ENCODE measurements at regions of chr14 and their contacts with region 1.

Region 1: DNA sequence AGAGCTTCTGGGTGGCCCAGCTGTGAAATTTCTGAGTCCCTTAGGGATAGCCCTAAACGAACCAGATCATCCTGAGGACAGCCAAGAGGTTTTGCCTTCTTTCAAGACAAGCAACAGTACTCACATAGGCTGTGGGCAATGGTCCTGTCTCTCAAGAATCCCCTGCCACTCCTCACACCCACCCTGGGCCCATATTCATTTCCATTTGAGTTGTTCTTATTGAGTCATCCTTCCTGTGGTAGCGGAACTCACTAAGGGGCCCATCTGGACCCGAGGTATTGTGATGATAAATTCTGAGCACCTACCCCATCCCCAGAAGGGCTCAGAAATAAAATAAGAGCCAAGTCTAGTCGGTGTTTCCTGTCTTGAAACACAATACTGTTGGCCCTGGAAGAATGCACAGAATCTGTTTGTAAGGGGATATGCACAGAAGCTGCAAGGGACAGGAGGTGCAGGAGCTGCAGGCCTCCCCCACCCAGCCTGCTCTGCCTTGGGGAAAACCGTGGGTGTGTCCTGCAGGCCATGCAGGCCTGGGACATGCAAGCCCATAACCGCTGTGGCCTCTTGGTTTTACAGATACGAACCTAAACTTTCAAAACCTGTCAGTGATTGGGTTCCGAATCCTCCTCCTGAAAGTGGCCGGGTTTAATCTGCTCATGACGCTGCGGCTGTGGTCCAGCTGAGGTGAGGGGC is 38.9 kb downstream of the DAD1 start:
- DNase-seq: no peak
- ATAC-seq: peak in 2 of 4 donors; percentile 17 to 24
- H3K4me3 ChIP-seq: peak overlapping the region in 1 of 12 donors; percentile 32
- H3K27ac ChIP-seq: peak overlapping the region in 5 of 12 donors; percentile 13 to 89 (median 45)
- H3K4me1 ChIP-seq: peaks cover 0 to 69% (median 24%) of the 10 kb centered on the region in 12 donors
- H3K27me3 ChIP-seq: no peaks in the 10 kb centered on the region
- CTCF ChIP-seq: no peak
- POLR2A ChIP-seq: no peak

Region 2: DNA sequence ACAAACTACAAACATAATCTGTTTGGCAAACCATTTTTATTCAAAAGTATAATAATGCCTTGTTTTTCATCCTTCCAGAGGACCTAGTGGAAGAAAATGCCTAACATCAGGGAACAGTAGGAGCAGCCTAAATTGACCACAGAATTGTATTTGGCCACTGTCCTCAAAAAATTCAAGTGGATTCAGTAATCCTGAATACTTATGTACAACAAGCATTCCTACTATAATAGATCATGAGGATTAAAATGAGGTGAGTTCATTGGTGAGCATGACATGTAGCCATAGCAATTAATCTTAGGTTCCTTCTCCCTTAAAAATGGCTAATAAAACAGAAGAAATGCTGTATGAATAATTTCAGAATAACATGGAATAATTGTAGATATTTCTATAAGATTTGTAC is 170.4 kb before region 1 on chr14:
- intact Hi-C with region 1: no loop called
- DNase-seq: no peak
- ATAC-seq: no peak
- H3K4me3 ChIP-seq: no peak overlapping the region
- H3K27ac ChIP-seq: no peak overlapping the region
- H3K4me1 ChIP-seq: peaks cover 0 to 12% (median 0%) of the 10 kb centered on the region in 12 donors
- H3K27me3 ChIP-seq: peaks cover 0 to 8% (median 0%) of the 10 kb centered on the region in 9 donors
- CTCF ChIP-seq: no peak
- POLR2A ChIP-seq: no peak

Region 3: GRCh38 chr14:22483863-22484593 is 66.1 kb before region 1 on chr14:
- intact Hi-C with region 1: loop called in 5 of 10 experiments (anchors 5 to 10 kb)
- DNase-seq: no peak
- ATAC-seq: peak in 1 of 4 donors; percentile 17
- H3K4me3 ChIP-seq: peak overlapping the region in 1 of 12 donors; percentile 4
- H3K27ac ChIP-seq: peak overlapping the region in 10 of 12 donors; percentile 49 to 72 (median 56)
- H3K4me1 ChIP-seq: peaks cover 11 to 87% (median 61%) of the 10 kb centered on the region in 12 donors
- H3K27me3 ChIP-seq: no peaks in the 10 kb centered on the region
- CTCF ChIP-seq: no peak
- POLR2A ChIP-seq: no peak

Region 4: GRCh38 chr14:22491683-22492621 is 58.2 kb before region 1 on chr14:
- intact Hi-C with region 1: loop called in 2 of 10 experiments (anchors 5 to 10 kb)
- DNase-seq: no peak
- ATAC-seq: no peak
- H3K4me3 ChIP-seq: peak overlapping the region in 2 of 12 donors; percentile 9 to 17
- H3K27ac ChIP-seq: peak overlapping the region in 1 of 12 donors; percentile 49
- H3K4me1 ChIP-seq: peaks cover 0 to 67% (median 22%) of the 10 kb centered on the region in 12 donors
- H3K27me3 ChIP-seq: peaks cover 0 to 3% (median 0%) of the 10 kb centered on the region in 9 donors
- CTCF ChIP-seq: no peak
- POLR2A ChIP-seq: no peak

Measured in heart left ventricle (tissue), 16 donors.